HEK293 (cell line): ENCODE measurements at regions of chr14 and their contacts with region 1.

Region 1: DNA sequence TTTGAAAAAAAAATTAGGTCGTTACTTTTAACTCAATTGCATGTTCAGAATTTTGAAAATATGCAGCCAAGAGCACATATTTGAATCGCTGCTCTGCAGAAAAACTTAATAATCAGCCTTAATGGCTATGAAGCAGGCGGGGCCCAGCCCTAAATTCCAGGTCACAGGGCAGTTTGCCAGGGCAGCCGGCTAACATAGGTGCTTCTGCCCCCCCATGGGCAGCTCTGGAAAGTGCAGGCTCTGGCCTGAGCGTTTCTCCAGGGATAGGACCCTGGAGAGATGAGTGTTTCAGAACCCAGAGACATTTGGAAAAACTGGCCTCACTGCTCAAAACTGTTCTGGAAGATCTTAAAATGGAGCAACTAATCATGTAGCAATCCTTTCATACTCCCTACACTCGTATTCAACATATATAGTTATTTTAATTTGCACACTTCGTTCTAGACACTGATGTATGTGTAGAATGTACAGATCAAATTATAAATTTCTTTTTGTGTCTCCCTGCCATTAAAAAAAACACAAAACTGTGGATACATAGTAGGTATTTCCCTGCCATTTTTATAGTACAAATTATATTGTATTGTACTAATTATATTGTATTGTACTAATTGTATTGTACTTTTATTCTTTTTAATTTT is 26.0 kb upstream of the PTGR2 start:
- H3K4me3 ChIP-seq: no peak overlapping the region
- H3K27ac ChIP-seq: no peak overlapping the region
- H3K4me1 ChIP-seq: no peaks in the 10 kb centered on the region; the same call in 1 of the 2 replicates
- CTCF ChIP-seq: peak; percentile 31; the same call in 1 of the 2 replicates

Region 2: GRCh38 chr14:73619524-73619923 is 206.1 kb before region 1 on chr14:
- CTCF ChIA-PET with region 1: interaction called, 10 read pairs
- POLR2A ChIA-PET with region 1: no interaction called
- H3K4me3 ChIP-seq: no peak overlapping the region
- H3K27ac ChIP-seq: no peak overlapping the region
- H3K4me1 ChIP-seq: no peaks in the 10 kb centered on the region
- CTCF ChIP-seq: no peak

Region 3: DNA sequence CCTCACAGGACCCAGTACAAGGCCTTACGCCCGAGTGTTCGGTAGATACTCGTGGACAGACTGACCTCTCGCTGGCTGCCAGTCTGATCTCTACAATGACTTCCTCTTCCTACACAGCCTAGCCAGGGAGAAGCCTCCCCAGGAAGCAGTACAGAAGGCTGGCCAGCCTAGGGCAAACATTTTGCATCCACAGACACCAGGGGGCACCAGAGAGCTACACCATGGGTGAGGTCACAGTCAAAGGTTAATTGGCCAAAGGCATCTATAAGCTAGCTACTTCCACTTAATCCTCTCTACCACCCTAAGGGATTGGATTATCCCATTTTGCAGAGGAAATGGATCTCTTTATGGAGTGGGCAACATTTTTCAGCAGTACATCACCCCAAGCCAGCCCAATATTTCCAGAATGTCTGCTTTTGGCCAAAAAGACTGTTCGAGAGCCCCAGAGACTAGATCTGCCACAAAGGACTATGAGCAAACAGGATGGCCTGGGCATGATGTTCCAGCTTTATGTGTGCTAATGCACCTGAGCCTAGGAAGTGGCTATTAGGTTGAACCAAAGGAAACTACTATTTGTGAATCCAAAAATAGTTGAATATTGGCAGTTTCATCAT is 96.8 kb before region 1 on chr14:
- CTCF ChIA-PET with region 1: interaction called, 30 read pairs
- POLR2A ChIA-PET with region 1: no interaction called
- H3K4me3 ChIP-seq: no peak overlapping the region
- H3K27ac ChIP-seq: no peak overlapping the region
- H3K4me1 ChIP-seq: 0 out of 2 replicates have a peak, but pooled peaks cover 3% of the 10 kb centered on the region
- CTCF ChIP-seq: peak; percentile 44; the same call in 1 of the 2 replicates

Region 4: DNA sequence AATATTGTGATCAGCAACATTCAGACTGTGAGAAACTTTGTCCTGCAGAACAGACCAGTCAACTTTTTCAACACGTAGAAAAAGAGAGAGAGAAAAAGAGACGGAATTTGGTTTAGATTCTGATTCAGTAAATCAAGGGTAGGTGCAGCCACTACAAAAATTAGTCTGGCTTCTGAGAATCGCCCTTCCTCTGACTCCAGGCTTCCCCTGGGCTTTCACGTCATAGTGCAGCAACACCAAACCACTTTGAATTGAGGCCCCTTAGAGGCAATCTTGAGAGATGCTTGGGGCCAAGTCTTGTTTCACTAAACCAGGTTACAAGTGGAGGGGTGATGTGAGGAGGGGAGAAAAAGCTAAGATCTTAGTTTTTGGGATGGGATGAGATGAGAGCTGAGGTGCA is 11.5 kb before region 1 on chr14:
- CTCF ChIA-PET with region 1: interaction called, 12 read pairs
- POLR2A ChIA-PET with region 1: interaction called, 6 read pairs
- H3K4me3 ChIP-seq: no peak overlapping the region
- H3K27ac ChIP-seq: no peak overlapping the region
- H3K4me1 ChIP-seq: no peaks in the 10 kb centered on the region
- CTCF ChIP-seq: no peak

Region 5: DNA sequence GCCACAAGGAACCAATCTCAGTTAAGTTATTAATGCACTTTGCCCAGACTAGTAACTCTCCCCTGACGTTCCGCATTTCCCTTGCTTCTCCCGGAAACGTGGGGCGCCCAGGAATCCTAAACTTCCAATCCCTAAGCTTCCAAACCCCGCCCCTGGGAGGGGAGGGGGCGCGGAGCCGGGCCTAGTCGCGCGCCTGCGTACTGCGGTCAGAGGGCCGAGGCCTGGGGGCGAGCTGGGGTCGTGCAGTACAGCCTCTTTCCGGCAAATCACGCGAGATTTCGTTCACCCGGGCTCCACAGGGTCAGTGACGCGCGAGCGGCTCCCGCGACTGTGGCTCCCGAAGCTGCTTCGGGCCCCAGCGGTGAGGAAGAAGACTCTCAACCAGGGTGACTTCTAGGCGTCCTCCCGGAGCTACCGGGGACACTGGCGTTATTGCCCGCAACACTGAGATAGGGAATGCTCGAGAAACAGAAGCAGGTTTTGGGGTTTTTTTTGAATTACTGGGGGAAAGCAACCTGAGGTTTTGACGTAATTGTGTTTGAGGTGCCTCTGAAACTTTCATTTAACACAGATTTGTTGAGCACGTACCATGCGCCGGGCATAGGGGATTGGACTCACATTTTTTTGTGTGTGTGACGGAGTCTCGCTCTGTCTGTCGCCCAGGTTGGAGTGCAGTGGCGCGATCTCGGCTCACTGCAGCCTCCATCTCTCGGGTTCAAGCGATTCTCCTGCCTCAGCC is 26.1 kb after region 1 on chr14 and contains the start of gene PTGR2:
- CTCF ChIA-PET with region 1: interaction called, 4 read pairs
- POLR2A ChIA-PET with region 1: interaction called, 16 read pairs
- H3K4me3 ChIP-seq: peak within 1 kb of the TSS; percentile 70
- H3K27ac ChIP-seq: peak within 1 kb of the TSS; percentile 55
- H3K4me1 ChIP-seq: no peaks in the 10 kb centered on the region; the same call in 1 of the 2 replicates
- CTCF ChIP-seq: no peak